Astrocyte of the cerebellum (primary cell): ENCODE measurements at regions of chr6 and their contacts with region 1.

Region 1: GRCh38 chr6:164424489-164424888 is 884.9 kb downstream of the C6orf118 start:
- DNase-seq: no peak
- H3K4me3 ChIP-seq: no peak overlapping the region
- CTCF ChIP-seq: no peak

Region 2: GRCh38 chr6:164507206-164507940 is 82.9 kb after region 1 on chr6:
- in situ Hi-C with region 1: loop called (anchors 5 kb)
- DNase-seq: no peak
- H3K4me3 ChIP-seq: no peak overlapping the region
- CTCF ChIP-seq: no peak

Region 3: DNA sequence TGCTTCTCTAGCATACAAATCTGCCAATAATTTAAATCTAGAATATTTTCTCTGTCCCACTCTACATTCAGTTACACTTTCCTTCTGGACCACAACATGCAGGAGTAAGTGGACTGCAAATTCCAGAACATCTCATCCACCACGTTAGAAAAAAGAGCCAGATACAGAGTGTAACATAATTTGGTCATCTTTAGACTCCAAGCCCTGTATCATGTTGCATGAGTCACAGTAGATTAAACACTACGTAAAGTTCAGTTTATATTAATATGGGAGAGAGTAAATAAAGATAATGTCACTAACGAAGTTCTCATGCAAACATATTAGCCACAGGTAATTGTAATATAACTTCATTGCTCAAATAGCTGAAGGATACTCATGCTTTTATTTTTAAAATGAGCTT is 557.9 kb after region 1 on chr6:
- in situ Hi-C with region 1: no loop called
- DNase-seq: no peak
- H3K4me3 ChIP-seq: no peak overlapping the region
- CTCF ChIP-seq: no peak